Endothelial cell of umbilical vein (primary cell): ENCODE measurements at regions of chr7 and their contacts with region 1.

Region 1: GRCh38 chr7:11689096-11689495 is 142.9 kb downstream of the THSD7A start:
- DNase-seq: no peak
- H3K4me3 ChIP-seq: no peak overlapping the region
- H3K27ac ChIP-seq: no peak overlapping the region
- H3K4me1 ChIP-seq: no peaks in the 10 kb centered on the region
- H3K27me3 ChIP-seq: no peaks in the 10 kb centered on the region
- CTCF ChIP-seq: no peak
- POLR2A ChIP-seq: no peak

Region 2: DNA sequence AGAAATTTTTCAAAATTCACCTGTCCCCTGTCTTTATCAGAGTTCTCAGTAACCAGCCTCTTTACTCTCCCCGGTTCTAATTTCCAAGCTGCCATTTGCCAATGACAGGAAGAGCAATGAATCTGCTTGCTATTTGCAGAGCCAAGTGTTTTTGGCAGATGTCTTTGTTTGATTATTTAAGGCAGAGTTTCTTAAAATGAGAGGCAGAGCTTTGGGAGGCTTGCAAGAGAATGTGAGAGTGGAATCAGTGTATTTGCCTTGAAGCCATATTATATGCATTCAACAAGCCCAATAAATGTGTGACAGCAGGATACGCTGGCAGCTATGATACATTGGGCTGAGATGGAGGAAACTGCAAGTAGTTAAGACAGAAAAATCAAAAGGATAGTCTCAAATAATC is 518.9 kb before region 1 on chr7:
- CTCF ChIA-PET with region 1: no interaction called
- POLR2A ChIA-PET with region 1: no interaction called
- dilution Hi-C with region 1: no loop called
- intact Hi-C with region 1: no loop called
- DNase-seq: no peak
- H3K4me3 ChIP-seq: no peak overlapping the region
- H3K27ac ChIP-seq: no peak overlapping the region
- H3K4me1 ChIP-seq: peaks cover 4% of the 10 kb centered on the region
- H3K27me3 ChIP-seq: no peaks in the 10 kb centered on the region
- CTCF ChIP-seq: no peak
- POLR2A ChIP-seq: no peak

Region 3: GRCh38 chr7:11623093-11623678 is 65.9 kb before region 1 on chr7:
- CTCF ChIA-PET with region 1: no interaction called
- POLR2A ChIA-PET with region 1: no interaction called
- dilution Hi-C with region 1: no loop called
- intact Hi-C with region 1: no loop called
- DNase-seq: no peak
- H3K4me3 ChIP-seq: no peak overlapping the region
- H3K27ac ChIP-seq: no peak overlapping the region
- H3K4me1 ChIP-seq: peaks cover 16% of the 10 kb centered on the region
- H3K27me3 ChIP-seq: no peaks in the 10 kb centered on the region
- CTCF ChIP-seq: no peak
- POLR2A ChIP-seq: no peak

Region 4: DNA sequence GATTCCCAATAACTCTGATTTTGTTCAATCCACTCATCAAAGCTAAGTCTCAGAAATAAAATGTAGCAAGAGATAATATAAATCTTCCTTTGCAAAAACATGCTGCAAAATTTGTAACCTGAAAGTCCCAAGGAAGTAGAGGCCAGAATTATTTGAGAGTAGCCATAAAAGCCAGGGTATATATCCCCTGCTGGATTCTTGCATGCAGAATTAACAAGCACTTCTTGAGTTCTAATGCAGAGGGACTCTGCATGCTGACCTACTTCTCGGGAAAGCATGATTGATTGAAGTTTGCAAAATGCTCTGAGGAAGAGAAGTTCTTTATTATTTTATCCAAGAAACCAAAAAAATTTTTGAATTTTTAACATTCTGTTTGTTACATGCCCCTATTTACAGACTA is 21.3 kb after region 1 on chr7:
- CTCF ChIA-PET with region 1: interaction called, 4 read pairs
- POLR2A ChIA-PET with region 1: no interaction called
- dilution Hi-C with region 1: no loop called
- intact Hi-C with region 1: loop called (anchors 1 kb)
- DNase-seq: no peak
- H3K4me3 ChIP-seq: no peak overlapping the region
- H3K27ac ChIP-seq: no peak overlapping the region
- H3K4me1 ChIP-seq: peaks cover 41% of the 10 kb centered on the region
- H3K27me3 ChIP-seq: no peaks in the 10 kb centered on the region
- CTCF ChIP-seq: no peak
- POLR2A ChIP-seq: no peak

Region 5: DNA sequence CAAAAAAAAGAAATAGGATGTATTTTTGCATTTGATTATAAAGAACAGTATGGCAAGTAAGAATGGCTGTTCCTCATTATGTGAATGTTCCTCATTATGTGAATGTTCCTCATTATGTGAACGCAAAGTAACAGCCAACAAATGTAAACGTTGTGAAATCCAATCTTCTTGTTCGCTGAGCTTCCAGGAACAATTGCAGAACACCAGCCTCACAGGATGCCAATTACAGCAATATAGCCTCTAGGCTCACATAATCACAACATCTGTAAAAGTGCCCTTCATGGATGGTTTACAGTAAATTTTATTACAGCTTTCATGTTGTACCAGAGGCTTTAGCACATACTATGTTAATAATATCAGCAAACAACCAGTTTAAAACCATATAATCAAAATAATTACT is 71.3 kb after region 1 on chr7:
- CTCF ChIA-PET with region 1: no interaction called
- POLR2A ChIA-PET with region 1: no interaction called
- dilution Hi-C with region 1: no loop called
- intact Hi-C with region 1: no loop called
- DNase-seq: no peak
- H3K4me3 ChIP-seq: no peak overlapping the region
- H3K27ac ChIP-seq: no peak overlapping the region
- H3K4me1 ChIP-seq: no peaks in the 10 kb centered on the region
- H3K27me3 ChIP-seq: no peaks in the 10 kb centered on the region
- CTCF ChIP-seq: no peak
- POLR2A ChIP-seq: no peak